MCF 10A (cell line): ENCODE measurements at regions of chr7 and their contacts with region 1.

Region 1: GRCh38 chr7:48299580-48300169 is 128.4 kb downstream of the ABCA13 start:
- DNase-seq: peak; percentile 71
- H3K4me3 Mint-ChIP-seq: no peak overlapping the region
- H3K27ac Mint-ChIP-seq: no peak overlapping the region
- H3K4me1 Mint-ChIP-seq: peaks cover 12% of the 10 kb centered on the region
- H3K27me3 Mint-ChIP-seq: no peaks in the 10 kb centered on the region
- CTCF ChIP-seq: peak; percentile 76

Region 2: DNA sequence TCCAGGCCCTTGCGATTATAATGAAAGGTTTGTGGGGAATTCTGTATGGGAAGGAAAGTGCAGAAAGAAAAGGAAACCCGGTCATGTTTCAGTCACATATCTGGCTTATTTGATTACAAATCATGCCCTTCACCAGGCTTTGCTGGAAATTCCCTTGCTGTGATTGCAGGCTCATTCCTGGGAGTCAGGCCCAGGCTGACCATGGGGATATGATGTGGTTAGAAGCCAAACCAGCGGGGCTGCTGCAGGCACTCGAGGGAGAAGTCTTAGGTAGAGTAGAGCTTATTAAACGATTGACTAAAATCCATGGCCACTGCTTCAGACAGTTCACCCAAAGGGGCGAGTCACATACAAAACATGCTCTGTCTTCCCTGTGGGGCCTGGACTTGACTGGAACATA is 367.7 kb before region 1 on chr7:
- CTCF ChIA-PET with region 1: no interaction called
- POLR2A ChIA-PET with region 1: no interaction called
- intact Hi-C with region 1: no loop called
- DNase-seq: no peak
- H3K4me3 Mint-ChIP-seq: no peak overlapping the region
- H3K27ac Mint-ChIP-seq: no peak overlapping the region
- H3K4me1 Mint-ChIP-seq: no peaks in the 10 kb centered on the region
- H3K27me3 Mint-ChIP-seq: no peaks in the 10 kb centered on the region
- CTCF ChIP-seq: no peak

Region 3: DNA sequence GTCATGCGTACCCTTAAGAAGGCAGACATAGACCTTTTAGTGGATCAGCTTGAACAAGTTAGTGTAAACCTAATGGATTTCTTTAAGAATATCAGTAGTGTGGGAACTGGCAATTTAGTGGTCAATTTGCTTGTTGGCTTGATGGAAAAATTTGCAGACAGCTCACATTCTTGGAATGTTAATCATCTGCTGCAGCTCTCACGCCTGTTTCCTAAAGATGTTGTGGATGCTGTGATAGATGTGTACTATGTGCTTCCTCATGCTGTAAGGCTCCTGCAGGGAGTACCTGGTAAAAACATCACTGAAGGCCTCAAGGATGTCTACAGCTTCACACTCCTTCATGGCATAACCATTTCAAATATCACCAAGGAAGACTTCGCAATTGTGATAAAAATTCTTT is 25.0 kb before region 1 on chr7:
- CTCF ChIA-PET with region 1: interaction called, 11 read pairs
- POLR2A ChIA-PET with region 1: no interaction called
- intact Hi-C with region 1: no loop called
- DNase-seq: no peak
- H3K4me3 Mint-ChIP-seq: no peak overlapping the region
- H3K27ac Mint-ChIP-seq: no peak overlapping the region
- H3K4me1 Mint-ChIP-seq: no peaks in the 10 kb centered on the region
- H3K27me3 Mint-ChIP-seq: peaks cover 17% of the 10 kb centered on the region
- CTCF ChIP-seq: no peak

Region 4: GRCh38 chr7:48312151-48312550 is 12.5 kb after region 1 on chr7:
- CTCF ChIA-PET with region 1: interaction called, 27 read pairs
- POLR2A ChIA-PET with region 1: no interaction called
- intact Hi-C with region 1: no loop called
- DNase-seq: no peak
- H3K4me3 Mint-ChIP-seq: no peak overlapping the region
- H3K27ac Mint-ChIP-seq: no peak overlapping the region
- H3K4me1 Mint-ChIP-seq: peaks cover 19% of the 10 kb centered on the region
- H3K27me3 Mint-ChIP-seq: no peaks in the 10 kb centered on the region
- CTCF ChIP-seq: no peak

Region 5: GRCh38 chr7:48424731-48425130 is 125.1 kb after region 1 on chr7:
- CTCF ChIA-PET with region 1: interaction called, 5 read pairs
- POLR2A ChIA-PET with region 1: no interaction called
- intact Hi-C with region 1: loop called (anchors 2 kb)
- DNase-seq: peak; percentile 53
- H3K4me3 Mint-ChIP-seq: no peak overlapping the region
- H3K27ac Mint-ChIP-seq: no peak overlapping the region
- H3K4me1 Mint-ChIP-seq: peaks cover 39% of the 10 kb centered on the region
- H3K27me3 Mint-ChIP-seq: no peaks in the 10 kb centered on the region
- CTCF ChIP-seq: peak; percentile 80

Region 6: GRCh38 chr7:48880851-48881250 is 581.2 kb after region 1 on chr7:
- CTCF ChIA-PET with region 1: interaction called, 75 read pairs
- POLR2A ChIA-PET with region 1: no interaction called
- intact Hi-C with region 1: no loop called
- DNase-seq: no peak
- H3K4me3 Mint-ChIP-seq: no peak overlapping the region
- H3K27ac Mint-ChIP-seq: no peak overlapping the region
- H3K4me1 Mint-ChIP-seq: no peaks in the 10 kb centered on the region
- H3K27me3 Mint-ChIP-seq: peaks cover 27% of the 10 kb centered on the region
- CTCF ChIP-seq: no peak

Region 7: DNA sequence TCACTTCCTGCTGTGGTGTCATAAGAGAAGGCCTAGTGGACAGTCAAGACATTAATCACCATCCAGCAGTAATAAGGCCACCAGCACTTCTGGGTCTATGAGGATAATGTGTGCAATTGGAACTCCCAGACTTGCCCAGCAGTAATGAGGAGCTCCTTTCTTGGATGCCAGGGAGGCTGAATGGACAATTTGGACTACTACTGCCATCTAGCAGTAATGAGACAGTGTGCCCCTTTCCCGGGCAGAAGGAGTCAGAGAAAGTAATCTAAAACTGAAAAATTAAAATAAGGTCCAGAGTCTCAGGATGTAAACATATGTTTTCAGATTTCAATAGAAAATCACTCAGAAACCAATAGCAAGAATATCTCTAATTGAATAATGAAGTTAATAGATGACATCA is 1025.0 kb after region 1 on chr7:
- CTCF ChIA-PET with region 1: interaction called, 8 read pairs
- POLR2A ChIA-PET with region 1: no interaction called
- intact Hi-C with region 1: loop called (anchors 2 kb)
- DNase-seq: peak; percentile 47
- H3K4me3 Mint-ChIP-seq: no peak overlapping the region
- H3K27ac Mint-ChIP-seq: no peak overlapping the region
- H3K4me1 Mint-ChIP-seq: no peaks in the 10 kb centered on the region
- H3K27me3 Mint-ChIP-seq: peaks cover 58% of the 10 kb centered on the region
- CTCF ChIP-seq: peak; percentile 39